ENCODE measurements at regions of chr16 and their contacts with region 1.

Region 1: GRCh38 chr16:50313596-50314478 is 47.5 kb downstream of the ADCY7 start:
- DNase-seq: peak in 2 of 5 donors; percentile 29 to 38
- H3K4me3 ChIP-seq: no peak overlapping the region
- H3K4me3 Mint-ChIP-seq: peak overlapping the region in 1 of 7 donors; percentile 39
- H3K27ac ChIP-seq: no peak overlapping the region
- H3K27ac Mint-ChIP-seq: peak overlapping the region; percentile 35 to 94 (median 74)
- H3K4me1 ChIP-seq: peaks cover 14% of the 10 kb centered on the region
- H3K4me1 Mint-ChIP-seq: peaks cover 16 to 22% (median 18%) of the 10 kb centered on the region in 3 donors
- H3K27me3 ChIP-seq: no peaks in the 10 kb centered on the region
- H3K27me3 Mint-ChIP-seq: no peaks in the 10 kb centered on the region

Region 2: DNA sequence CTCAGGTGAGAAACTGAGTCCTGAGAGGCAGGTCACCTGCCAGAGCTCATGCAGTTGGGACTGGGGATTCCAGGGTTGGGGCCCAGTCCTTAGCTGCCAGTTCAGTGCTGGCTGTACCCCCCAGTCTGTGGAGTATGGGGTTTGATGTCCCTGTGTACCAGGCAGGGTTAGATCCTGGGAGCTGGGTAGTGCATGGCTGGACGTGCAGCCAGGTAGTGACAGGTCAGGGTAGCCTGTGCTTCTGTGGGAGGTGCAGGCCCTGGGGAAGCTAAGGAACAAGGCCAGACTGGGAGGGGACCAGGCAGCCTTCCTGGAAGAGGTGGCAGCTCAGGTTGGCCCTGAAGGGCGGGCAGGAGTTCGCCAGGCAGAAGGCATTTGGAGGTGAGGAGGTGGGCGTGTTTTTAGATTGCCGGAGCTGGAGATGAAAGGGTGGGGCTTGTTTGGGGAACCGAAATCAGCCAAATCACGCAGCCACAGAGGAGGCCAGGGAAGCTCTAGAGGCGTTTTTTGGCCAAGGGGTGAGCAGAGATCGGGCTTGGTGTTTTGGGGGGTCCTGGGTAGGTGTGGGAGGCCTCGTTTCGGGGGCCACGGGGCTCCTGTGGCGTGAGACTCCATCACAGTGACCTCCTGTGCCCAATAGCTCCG is 40.0 kb before region 1 on chr16:
- CTCF ChIA-PET with region 1: interaction called, 15 read pairs
- POLR2A ChIA-PET with region 1: interaction called, 3 read pairs
- DNase-seq: peak in 2 of 5 donors; percentile 40 to 57
- H3K4me3 ChIP-seq: peak overlapping the region; percentile 67
- H3K4me3 Mint-ChIP-seq: peak overlapping the region; percentile 85 to 97 (median 90)
- H3K27ac ChIP-seq: peak overlapping the region; percentile 66
- H3K27ac Mint-ChIP-seq: peak overlapping the region; percentile 94 to 99 (median 98)
- H3K4me1 ChIP-seq: peaks cover 98% of the 10 kb centered on the region
- H3K4me1 Mint-ChIP-seq: peaks cover 93 to 100% (median 93%) of the 10 kb centered on the region in 3 donors
- H3K27me3 ChIP-seq: no peaks in the 10 kb centered on the region
- H3K27me3 Mint-ChIP-seq: no peaks in the 10 kb centered on the region

Measured in CD8-positive, alpha-beta memory T cell (primary cell).